ENCODE measurements at regions of chr4 and their contacts with region 1.

Region 1: GRCh38 chr4:74311696-74312313 is 3.5 kb downstream of the EPGN start:
- DNase-seq: no peak
- ATAC-seq: peak in 1 of 2 donors; percentile 53

Region 2: GRCh38 chr4:74189331-74190043 is 122.3 kb before region 1 on chr4:
- intact Hi-C with region 1: loop called in 1 of 2 experiments (anchors 5 kb)
- DNase-seq: no peak
- ATAC-seq: peak in 1 of 2 donors; percentile 43

Region 3: DNA sequence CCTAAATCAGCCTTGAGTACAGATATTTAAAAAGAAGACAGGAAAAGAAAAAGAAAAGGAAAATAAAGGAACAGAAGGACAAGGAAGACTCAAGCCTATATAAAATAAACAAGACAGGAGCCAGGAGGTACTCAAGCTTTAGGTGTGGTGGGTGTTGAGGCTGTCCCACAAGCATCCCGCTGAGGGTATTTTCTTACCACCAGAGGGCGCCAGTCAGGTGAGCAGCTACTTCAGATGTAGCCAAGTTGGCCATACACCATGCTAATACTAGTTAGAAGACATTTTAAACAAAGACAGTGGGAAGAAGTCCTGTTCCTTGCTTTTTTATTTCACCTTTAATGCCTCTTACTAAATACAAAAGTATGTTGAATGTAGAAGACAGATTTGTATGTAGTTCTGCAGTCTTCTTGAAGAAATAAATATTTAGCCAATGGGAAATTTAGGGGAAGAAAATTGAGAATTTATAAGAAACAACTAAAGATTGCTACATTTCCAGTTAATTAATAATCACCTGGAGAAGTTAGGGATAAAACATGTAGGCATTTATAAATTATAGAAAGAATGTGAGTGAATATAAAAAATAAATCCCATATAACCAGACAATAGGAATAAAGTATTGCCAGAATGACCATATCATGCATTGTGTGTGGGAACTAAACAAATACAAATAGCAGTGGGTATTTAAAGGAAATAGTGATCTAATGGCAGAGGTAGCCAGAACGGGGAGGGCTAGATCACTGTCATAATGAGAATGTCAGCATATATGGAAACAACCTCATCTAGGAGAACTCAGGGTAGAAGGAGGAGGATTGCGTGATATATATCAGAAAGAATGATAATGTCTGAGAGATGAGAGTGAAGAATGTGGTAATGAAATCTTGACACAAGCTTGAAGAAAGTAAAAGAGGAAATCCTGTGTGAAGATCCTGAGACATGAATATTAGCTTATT is 82.8 kb before region 1 on chr4:
- intact Hi-C with region 1: loop called (anchors 5 kb)
- DNase-seq: peak; percentile 74
- ATAC-seq: peak; percentile 59 to 80

Measured in left cardiac atrium (tissue), 4 donors.